Activated CD8-positive, alpha-beta T cell treated with anti-CD3 and anti-CD28 coated beads for 36 hours (primary cell): ENCODE measurements at regions of chr6 and their contacts with region 1.

Region 1: DNA sequence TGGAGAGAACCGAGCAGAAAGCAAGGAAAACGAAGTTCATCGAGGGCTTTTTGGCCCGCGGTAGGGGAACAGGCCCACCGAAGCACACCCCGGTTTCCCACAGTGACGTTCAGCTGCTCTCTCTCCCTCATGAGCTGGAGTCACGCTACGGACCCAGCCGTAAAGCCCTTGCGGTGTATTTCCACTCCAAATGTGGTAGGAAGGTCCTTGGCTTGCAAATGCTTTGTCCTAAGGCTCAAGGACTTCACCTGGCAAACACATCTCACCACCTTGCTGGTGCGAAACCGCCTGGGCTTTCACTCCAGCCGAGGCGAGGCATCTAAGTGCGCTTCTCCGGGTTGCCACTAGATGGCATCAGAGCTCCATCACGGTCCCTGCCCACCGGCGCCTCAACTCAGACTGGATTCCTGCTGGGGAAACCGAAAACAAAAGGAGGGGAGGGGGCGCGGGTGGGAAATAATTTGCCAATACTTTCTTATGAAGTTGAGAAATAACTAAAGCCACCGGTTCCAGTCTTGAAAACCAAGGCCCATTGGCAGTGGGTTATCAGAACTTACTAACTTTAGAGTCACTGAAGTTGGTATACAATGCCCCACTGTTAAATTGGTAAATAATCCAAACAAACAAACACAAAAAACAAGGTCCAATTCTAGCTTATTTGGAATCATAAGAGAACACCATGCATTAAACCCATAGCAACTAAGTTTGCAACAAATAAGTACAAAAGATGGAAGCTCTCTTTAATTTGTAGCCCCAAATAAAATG is 13.4 kb upstream of the FOXC1 start:
- DNase-seq: peak; percentile 67
- ATAC-seq: peak; percentile 80
- H3K4me3 Mint-ChIP-seq: no peak overlapping the region
- H3K27ac Mint-ChIP-seq: no peak overlapping the region
- H3K4me1 Mint-ChIP-seq: no peaks in the 10 kb centered on the region
- H3K27me3 Mint-ChIP-seq: peaks cover 48% of the 10 kb centered on the region
- CTCF ChIP-seq: peak; percentile 92

Region 2: GRCh38 chr6:1624851-1625781 is 28.8 kb after region 1 on chr6:
- CTCF ChIA-PET with region 1: interaction called, 19 read pairs
- POLR2A ChIA-PET with region 1: no interaction called
- intact Hi-C with region 1: no loop called
- DNase-seq: no peak
- ATAC-seq: peak; percentile 31
- H3K4me3 Mint-ChIP-seq: peak overlapping the region; percentile 53
- H3K27ac Mint-ChIP-seq: no peak overlapping the region
- H3K4me1 Mint-ChIP-seq: peaks cover 9% of the 10 kb centered on the region
- H3K27me3 Mint-ChIP-seq: peaks cover 65% of the 10 kb centered on the region
- CTCF ChIP-seq: no peak

Region 3: GRCh38 chr6:1695546-1696462 is 99.5 kb after region 1 on chr6:
- CTCF ChIA-PET with region 1: no interaction called
- POLR2A ChIA-PET with region 1: no interaction called
- intact Hi-C with region 1: no loop called
- DNase-seq: no peak
- ATAC-seq: no peak
- H3K4me3 Mint-ChIP-seq: no peak overlapping the region
- H3K27ac Mint-ChIP-seq: no peak overlapping the region
- H3K4me1 Mint-ChIP-seq: no peaks in the 10 kb centered on the region
- H3K27me3 Mint-ChIP-seq: no peaks in the 10 kb centered on the region
- CTCF ChIP-seq: no peak

Region 4: GRCh38 chr6:2196079-2196679 is 599.9 kb after region 1 on chr6:
- CTCF ChIA-PET with region 1: interaction called, 9 read pairs
- POLR2A ChIA-PET with region 1: no interaction called
- intact Hi-C with region 1: loop called (anchors 5 kb)
- DNase-seq: peak; percentile 47
- ATAC-seq: peak; percentile 87
- H3K4me3 Mint-ChIP-seq: no peak overlapping the region
- H3K27ac Mint-ChIP-seq: no peak overlapping the region
- H3K4me1 Mint-ChIP-seq: no peaks in the 10 kb centered on the region
- H3K27me3 Mint-ChIP-seq: no peaks in the 10 kb centered on the region
- CTCF ChIP-seq: peak; percentile 83

Region 5: DNA sequence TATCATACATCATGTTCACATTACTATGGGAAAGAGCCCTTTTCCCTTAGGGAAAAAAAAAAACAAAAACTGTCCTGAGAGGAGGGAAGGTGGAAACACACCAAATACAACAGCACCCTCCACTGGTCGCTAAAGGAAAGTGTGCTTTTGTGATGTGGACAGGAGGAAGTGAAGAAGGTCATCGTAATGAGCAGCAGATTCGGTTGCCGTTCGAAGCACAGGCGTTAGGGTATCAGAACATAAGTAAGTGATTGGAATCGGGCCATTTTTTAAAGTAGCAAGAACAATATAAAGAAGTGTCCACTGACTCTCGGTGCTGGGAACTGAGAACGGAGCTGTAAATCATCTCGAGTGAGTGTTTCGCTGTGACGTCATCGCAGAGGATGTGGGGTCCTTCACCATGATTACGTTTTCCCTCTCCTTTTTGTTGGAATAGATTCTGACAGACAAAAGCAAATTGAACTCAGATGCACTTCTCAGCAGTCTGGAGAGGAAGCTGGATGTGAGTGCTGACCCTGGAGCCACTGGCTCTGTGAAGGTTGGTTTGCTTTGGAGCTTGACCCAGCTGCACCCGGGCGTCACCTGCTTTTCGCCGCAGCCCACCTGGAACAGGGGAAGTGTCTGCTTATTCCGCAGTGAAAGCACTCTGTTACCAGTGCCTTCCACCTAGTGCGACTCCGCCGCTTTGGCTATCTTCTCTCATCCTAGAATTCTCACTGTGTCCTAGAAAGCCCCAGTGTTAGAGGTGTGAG is 852.7 kb after region 1 on chr6:
- CTCF ChIA-PET with region 1: interaction called, 20 read pairs
- POLR2A ChIA-PET with region 1: no interaction called
- intact Hi-C with region 1: no loop called
- DNase-seq: peak; percentile 45
- ATAC-seq: peak; percentile 71
- H3K4me3 Mint-ChIP-seq: peak overlapping the region; percentile 47
- H3K27ac Mint-ChIP-seq: peak overlapping the region; percentile 18
- H3K4me1 Mint-ChIP-seq: peaks cover 4% of the 10 kb centered on the region
- H3K27me3 Mint-ChIP-seq: peaks cover 4% of the 10 kb centered on the region
- CTCF ChIP-seq: peak; percentile 86